MCF 10A (cell line): ENCODE measurements at regions of chr5 and their contacts with region 1.

Region 1: DNA sequence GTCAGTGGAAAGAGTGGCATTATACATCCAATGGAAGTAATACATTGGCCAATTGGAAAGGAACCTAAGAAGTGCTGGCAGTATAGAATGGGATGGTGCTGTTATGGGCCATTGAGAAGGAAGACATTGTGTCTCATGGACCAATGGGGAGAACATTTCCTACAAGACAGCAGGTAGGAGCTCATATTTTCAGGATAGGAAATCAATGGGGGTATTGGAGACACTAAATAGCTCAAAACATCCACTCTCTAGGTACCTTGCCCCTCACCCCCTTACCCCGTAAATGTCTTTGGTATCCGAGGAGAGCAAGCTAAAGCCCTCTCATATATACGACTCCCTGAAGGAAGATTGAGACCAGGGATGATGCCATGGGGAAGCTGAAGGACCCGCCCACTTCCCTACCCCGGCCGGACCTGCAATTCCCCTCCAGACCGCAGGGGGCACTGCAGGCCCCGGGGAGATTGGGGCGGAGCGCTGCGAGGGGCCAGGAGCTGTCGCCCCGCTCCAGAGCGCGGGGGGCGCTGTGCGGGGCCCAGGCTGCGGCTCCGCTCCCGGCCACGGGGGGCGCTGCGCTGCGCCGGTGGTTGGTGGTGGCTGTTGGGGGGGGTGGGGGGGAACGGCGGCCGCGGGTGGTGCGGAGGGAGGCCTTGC is at the start of gene KDM3B:
- DNase-seq: peak; percentile 86
- H3K4me3 Mint-ChIP-seq: peak within 1 kb of the TSS; percentile 99
- H3K27ac Mint-ChIP-seq: peak within 1 kb of the TSS; percentile 98
- H3K4me1 Mint-ChIP-seq: peaks cover 51% of the 10 kb centered on the region
- H3K27me3 Mint-ChIP-seq: no peaks in the 10 kb centered on the region
- CTCF ChIP-seq: peak; percentile 100
- total RNA-seq, gene KDM3B: 57.8 and 59.0 TPM in 2 replicates

Region 2: DNA sequence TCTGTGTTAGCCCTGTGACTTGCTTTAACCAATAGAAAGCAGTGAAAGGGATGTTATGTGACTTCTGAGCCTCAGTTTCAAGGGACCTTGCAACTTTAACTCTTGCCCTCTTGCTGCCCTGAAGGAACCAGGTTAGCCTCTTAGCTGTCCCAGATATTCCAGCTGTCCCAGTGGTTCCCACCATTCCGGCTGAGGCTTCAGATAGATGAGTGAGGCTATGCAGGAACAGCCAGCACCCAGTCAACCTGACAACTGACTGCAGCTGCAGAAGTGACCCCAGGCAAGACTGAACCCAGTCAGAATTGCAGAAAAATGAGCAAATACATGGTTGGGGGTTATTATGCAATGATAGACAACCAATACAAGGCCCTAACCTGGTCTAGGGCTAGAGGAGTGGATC is 128.7 kb before region 1 on chr5:
- CTCF ChIA-PET with region 1: interaction called, 106 read pairs
- POLR2A ChIA-PET with region 1: interaction called, 16 read pairs
- intact Hi-C with region 1: loop called (anchors 5 kb)
- DNase-seq: no peak
- H3K4me3 Mint-ChIP-seq: no peak overlapping the region
- H3K27ac Mint-ChIP-seq: no peak overlapping the region
- H3K4me1 Mint-ChIP-seq: peaks cover 7% of the 10 kb centered on the region
- H3K27me3 Mint-ChIP-seq: no peaks in the 10 kb centered on the region
- CTCF ChIP-seq: no peak

Region 3: DNA sequence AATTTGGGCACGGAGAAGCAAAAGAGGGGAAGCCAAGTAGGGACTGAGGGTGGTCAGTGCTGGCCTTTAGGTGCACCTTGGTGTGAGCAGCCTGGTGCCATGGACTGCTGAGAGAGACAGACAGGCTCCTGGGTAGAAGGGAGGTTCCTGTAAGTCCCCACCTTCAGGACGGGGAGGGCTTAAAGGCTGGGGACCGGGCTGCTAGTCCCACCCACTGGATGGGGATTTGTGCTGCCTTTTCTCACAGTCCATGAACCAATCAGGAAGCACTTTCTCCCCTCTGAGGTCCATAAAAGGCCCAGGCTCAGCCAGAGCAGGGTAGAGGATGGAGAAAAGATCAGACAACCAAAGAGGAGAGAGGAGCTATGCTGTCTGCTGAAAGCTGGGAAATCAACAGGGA is 35.8 kb before region 1 on chr5:
- CTCF ChIA-PET with region 1: interaction called, 17 read pairs
- POLR2A ChIA-PET with region 1: no interaction called
- intact Hi-C with region 1: no loop called
- DNase-seq: no peak
- H3K4me3 Mint-ChIP-seq: no peak overlapping the region
- H3K27ac Mint-ChIP-seq: no peak overlapping the region
- H3K4me1 Mint-ChIP-seq: no peaks in the 10 kb centered on the region
- H3K27me3 Mint-ChIP-seq: no peaks in the 10 kb centered on the region
- CTCF ChIP-seq: no peak

Region 4: DNA sequence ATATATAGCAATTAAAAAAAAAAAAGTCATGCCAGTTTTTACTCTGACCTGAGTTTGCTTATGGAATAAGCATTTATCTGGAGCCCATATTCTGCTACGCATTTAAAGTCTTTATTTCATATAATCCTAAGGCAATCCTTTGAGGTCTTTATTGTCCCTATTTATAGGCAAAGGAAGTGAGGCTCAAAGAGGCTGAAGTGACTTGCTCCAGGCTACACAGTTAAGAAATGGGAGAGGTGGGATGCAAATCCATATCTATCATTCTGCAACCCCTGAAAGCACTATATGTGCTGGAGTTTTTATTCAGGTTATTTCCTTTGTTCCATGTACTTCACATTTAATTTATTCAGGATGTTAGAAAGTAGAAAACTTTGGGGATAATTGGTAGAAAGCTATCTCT is 12.4 kb after region 1 on chr5:
- CTCF ChIA-PET with region 1: interaction called, 131 read pairs
- POLR2A ChIA-PET with region 1: interaction called, 52 read pairs
- intact Hi-C with region 1: no loop called
- DNase-seq: no peak
- H3K4me3 Mint-ChIP-seq: no peak overlapping the region
- H3K27ac Mint-ChIP-seq: no peak overlapping the region
- H3K4me1 Mint-ChIP-seq: peaks cover 37% of the 10 kb centered on the region
- H3K27me3 Mint-ChIP-seq: no peaks in the 10 kb centered on the region
- CTCF ChIP-seq: no peak

Region 5: DNA sequence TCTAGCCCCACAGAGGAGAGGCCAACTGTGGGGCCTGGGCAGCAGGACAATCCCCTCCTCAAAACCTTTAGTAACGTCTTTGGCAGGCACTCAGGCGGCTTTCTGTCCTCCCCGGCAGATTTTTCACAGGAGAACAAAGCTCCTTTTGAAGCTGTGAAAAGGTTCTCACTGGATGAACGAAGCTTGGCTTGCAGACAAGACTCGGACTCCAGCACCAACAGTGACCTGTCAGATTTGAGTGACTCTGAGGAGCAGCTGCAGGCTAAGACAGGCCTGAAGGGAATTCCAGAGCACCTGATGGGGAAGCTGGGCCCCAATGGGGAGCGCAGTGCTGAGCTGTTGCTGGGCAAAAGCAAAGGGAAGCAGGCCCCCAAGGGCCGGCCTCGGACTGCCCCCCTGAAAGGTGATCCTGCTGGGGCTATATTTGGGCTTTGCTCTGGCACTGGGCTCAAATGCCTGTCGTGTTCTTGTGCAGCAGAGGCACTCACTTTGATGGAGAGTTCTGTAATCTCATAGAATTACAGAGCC is 39.7 kb after region 1 on chr5:
- CTCF ChIA-PET with region 1: interaction called, 37 read pairs
- POLR2A ChIA-PET with region 1: interaction called, 22 read pairs
- intact Hi-C with region 1: no loop called
- DNase-seq: no peak
- H3K4me3 Mint-ChIP-seq: no peak overlapping the region
- H3K27ac Mint-ChIP-seq: no peak overlapping the region
- H3K4me1 Mint-ChIP-seq: peaks cover 11% of the 10 kb centered on the region
- H3K27me3 Mint-ChIP-seq: no peaks in the 10 kb centered on the region
- CTCF ChIP-seq: no peak

Region 6: DNA sequence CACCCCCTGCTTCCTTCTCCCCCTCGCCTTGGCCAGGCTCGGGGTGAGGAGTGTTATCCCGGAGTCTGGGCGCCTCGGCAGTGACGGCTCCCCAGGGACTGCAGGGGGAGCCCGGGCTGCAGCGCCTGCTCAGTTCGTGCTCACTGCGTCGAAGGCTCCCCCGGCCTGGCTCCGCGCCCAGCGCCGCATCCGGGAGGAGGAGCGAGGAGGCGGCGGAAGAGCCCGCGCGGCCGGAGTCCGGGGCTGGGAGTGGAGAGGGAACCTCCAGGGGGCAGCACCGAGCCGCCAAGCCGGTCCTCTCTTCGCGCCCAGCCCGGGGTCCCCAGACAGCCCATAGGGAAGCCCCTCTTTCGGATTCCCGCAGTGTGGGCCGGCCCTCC is 111.8 kb after region 1 on chr5:
- CTCF ChIA-PET with region 1: interaction called, 17 read pairs
- POLR2A ChIA-PET with region 1: interaction called, 25 read pairs
- intact Hi-C with region 1: no loop called
- DNase-seq: peak; percentile 98
- H3K4me3 Mint-ChIP-seq: peak overlapping the region; percentile 78
- H3K27ac Mint-ChIP-seq: peak overlapping the region; percentile 93
- H3K4me1 Mint-ChIP-seq: peaks cover 45% of the 10 kb centered on the region
- H3K27me3 Mint-ChIP-seq: peaks cover 20% of the 10 kb centered on the region
- CTCF ChIP-seq: peak; percentile 97

Region 7: GRCh38 chr5:138542956-138543729 is 190.9 kb after region 1 on chr5 and contains the start of gene ETF1:
- CTCF ChIA-PET with region 1: interaction called, 5 read pairs
- POLR2A ChIA-PET with region 1: interaction called, 57 read pairs
- intact Hi-C with region 1: no loop called
- DNase-seq: peak; percentile 100
- H3K4me3 Mint-ChIP-seq: peak within 1 kb of the TSS; percentile 79
- H3K27ac Mint-ChIP-seq: peak within 1 kb of the TSS; percentile 97
- H3K4me1 Mint-ChIP-seq: peaks cover 32% of the 10 kb centered on the region
- H3K27me3 Mint-ChIP-seq: no peaks in the 10 kb centered on the region
- CTCF ChIP-seq: no peak
- total RNA-seq, gene ETF1: 307 and 349 TPM in 2 replicates